Activated naive CD4-positive, alpha-beta T cell treated with anti-CD3 and anti-CD28 coated beads, Interleukin-2, amount 10 ng/mL, durations not matched to agents 7 days and 5 days (primary cell): ENCODE measurements at regions of chr11 and their contacts with region 1.

Region 1: DNA sequence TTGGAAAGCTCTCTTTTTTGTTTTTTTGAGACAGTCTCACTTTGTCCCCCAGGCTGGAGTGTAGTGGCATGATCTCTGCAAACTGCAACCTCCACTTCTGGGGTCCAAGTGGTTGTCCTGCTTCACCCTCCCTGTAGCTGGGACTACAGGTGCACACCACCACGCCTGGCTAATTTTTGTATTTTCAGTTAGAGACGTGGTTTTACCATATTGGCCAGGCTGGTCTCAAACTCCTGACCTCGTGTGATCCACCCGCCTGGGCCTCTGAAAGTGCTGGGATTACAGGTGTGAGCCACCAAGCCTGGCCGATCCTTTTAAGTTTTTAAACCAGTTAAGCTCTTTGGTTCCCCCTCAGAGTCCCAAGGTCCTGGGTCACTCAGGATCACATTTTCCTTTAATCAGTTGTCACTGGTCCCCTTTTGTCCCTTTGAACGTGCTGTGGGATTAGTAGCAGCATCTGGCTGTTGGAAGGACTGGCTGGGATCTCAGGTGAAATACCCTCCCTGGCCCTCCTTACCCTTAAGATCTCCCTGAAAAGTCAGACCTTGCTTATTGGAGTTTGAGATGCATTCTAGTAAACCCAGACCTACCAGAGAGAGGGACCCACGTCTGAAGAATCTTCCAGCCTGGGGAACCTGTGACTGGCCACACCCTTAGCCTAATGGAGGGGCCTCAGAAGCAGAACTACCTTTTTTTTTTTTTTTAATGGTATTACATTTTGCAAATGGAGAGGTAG is 8.1 kb downstream of the MALAT1 start:
- DNase-seq: peak; percentile 44
- H3K4me3 Mint-ChIP-seq: no peak overlapping the region
- H3K27ac Mint-ChIP-seq: peak overlapping the region; percentile 84
- H3K4me1 Mint-ChIP-seq: peaks cover 50% of the 10 kb centered on the region
- H3K27me3 Mint-ChIP-seq: no peaks in the 10 kb centered on the region

Region 2: GRCh38 chr11:64652586-64653387 is 854.2 kb before region 1 on chr11:
- CTCF ChIA-PET with region 1: no interaction called
- DNase-seq: peak; percentile 84
- H3K4me3 Mint-ChIP-seq: no peak overlapping the region
- H3K27ac Mint-ChIP-seq: no peak overlapping the region
- H3K4me1 Mint-ChIP-seq: peaks cover 4% of the 10 kb centered on the region
- H3K27me3 Mint-ChIP-seq: peaks cover 25% of the 10 kb centered on the region

Region 3: GRCh38 chr11:65382033-65382807 is 124.7 kb before region 1 on chr11 and contains the start of gene SLC25A45:
- CTCF ChIA-PET with region 1: interaction called, 25 read pairs
- DNase-seq: peak; percentile 92
- H3K4me3 Mint-ChIP-seq: peak within 1 kb of the TSS; percentile 83
- H3K27ac Mint-ChIP-seq: peak within 1 kb of the TSS; percentile 100
- H3K4me1 Mint-ChIP-seq: peaks cover 59% of the 10 kb centered on the region
- H3K27me3 Mint-ChIP-seq: no peaks in the 10 kb centered on the region

Region 4: DNA sequence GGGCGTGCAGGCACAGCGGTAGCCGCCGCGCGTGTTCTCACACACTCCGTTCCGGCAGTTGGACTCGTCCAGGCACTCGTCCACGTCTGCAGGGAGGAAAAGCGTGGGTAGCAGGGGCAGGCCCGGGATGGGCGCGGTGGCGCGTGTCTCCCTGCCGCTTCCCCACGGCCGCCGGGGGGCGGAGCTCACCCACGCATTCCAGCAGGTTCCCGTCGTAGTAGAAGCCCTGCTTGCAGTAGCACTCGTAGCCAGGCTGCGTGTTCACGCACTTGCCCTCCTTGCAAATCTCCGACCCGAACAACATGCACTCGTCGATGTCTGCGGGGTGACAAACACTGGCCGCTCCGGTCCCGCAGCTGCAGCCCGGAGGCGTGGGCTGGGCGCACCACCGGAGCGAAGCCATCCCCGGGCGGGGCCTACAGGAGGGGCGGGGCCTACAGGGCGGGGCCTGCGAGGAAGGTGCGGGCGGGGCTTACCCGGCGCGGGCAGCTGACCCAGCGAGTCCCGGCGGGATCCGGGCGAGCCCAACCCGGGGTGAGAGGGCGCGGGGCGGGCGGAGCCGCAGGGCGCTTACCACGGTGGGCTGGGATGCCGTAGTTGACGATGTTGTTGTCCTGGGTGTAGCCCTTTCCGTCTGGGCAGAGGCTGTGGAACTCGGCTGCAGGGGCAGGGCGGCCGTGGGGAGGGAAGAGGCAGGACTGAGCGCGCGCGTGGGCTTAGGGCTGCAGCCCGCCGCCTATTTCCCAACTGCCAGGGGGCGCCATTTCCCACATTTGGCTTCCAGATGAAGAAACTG is 33.6 kb after region 1 on chr11:
- CTCF ChIA-PET with region 1: no interaction called
- DNase-seq: peak; percentile 92
- H3K4me3 Mint-ChIP-seq: peak overlapping the region; percentile 81
- H3K27ac Mint-ChIP-seq: peak overlapping the region; percentile 89
- H3K4me1 Mint-ChIP-seq: peaks cover 20% of the 10 kb centered on the region
- H3K27me3 Mint-ChIP-seq: no peaks in the 10 kb centered on the region